ENCODE measurements at regions of chr21 and their contacts with region 1.

Region 1: DNA sequence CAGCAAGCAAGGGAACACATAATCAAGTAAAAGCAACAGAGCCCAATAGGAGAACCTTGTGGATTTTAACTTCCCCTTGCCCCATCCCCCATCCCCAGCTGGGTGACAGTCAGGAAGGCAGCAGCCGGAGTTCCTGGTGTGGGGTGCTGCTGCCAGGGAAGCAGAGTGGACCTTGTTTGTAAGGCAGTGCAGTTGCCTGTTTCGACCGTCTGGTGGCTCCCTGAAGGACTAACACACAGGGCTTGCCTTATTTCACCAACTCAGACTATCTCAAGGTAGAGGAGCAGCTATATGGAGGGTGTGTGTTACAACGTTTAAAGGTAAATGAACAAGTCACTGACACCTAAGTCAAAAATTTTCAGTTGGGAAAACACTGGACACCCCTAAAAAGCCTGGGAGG is 6.6 kb downstream of the KRTAP10-8 start:
- DNase-seq: peak; percentile 27
- ATAC-seq: peak; percentile 64
- H3K4me3 Mint-ChIP-seq: peak overlapping the region; percentile 18
- H3K27ac Mint-ChIP-seq: peak overlapping the region; percentile 90
- H3K4me1 Mint-ChIP-seq: peaks cover 45% of the 10 kb centered on the region
- H3K27me3 Mint-ChIP-seq: no peaks in the 10 kb centered on the region

Region 2: DNA sequence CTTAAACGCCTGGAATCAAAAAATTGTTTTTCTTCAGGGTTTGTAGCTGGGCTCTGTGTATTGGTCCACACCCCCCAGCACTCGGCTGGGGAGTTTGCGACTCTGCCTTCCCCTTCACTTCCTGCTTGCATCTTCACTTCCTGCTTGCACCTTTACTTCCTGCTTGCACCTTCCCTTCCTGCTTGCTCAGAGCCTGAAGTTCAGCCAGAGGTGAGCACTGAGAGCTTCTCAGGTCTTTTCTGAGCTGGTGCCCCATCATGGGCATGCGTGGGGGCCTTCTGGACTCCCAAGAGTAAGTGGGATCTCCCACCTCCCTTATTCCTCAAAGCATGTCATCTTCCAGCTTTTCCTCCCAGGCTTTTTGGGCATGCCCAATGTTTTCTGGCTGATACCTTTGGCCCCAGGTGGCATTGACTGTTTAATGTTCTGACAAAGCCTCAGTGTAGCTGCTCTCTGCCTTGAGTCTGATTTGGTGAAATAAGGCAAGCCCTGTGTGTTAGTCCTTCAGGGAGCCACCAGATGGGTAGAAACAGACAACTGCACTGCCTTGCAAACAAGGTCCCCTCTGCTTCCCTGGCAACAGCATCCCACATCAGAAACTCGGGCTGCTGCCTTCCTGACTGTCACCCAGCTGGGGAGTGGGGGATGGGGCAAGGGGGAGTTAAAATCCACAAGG is 70.7 kb before region 1 on chr21:
- CTCF ChIA-PET with region 1: no interaction called
- POLR2A ChIA-PET with region 1: no interaction called
- intact Hi-C with region 1: loop called in 1 of 2 experiments (anchors 5 kb)
- DNase-seq: peak; percentile 33
- ATAC-seq: peak; percentile 71
- H3K4me3 Mint-ChIP-seq: peak overlapping the region; percentile 34
- H3K27ac Mint-ChIP-seq: peak overlapping the region; percentile 93
- H3K4me1 Mint-ChIP-seq: peaks cover 23% of the 10 kb centered on the region
- H3K27me3 Mint-ChIP-seq: no peaks in the 10 kb centered on the region

Region 3: DNA sequence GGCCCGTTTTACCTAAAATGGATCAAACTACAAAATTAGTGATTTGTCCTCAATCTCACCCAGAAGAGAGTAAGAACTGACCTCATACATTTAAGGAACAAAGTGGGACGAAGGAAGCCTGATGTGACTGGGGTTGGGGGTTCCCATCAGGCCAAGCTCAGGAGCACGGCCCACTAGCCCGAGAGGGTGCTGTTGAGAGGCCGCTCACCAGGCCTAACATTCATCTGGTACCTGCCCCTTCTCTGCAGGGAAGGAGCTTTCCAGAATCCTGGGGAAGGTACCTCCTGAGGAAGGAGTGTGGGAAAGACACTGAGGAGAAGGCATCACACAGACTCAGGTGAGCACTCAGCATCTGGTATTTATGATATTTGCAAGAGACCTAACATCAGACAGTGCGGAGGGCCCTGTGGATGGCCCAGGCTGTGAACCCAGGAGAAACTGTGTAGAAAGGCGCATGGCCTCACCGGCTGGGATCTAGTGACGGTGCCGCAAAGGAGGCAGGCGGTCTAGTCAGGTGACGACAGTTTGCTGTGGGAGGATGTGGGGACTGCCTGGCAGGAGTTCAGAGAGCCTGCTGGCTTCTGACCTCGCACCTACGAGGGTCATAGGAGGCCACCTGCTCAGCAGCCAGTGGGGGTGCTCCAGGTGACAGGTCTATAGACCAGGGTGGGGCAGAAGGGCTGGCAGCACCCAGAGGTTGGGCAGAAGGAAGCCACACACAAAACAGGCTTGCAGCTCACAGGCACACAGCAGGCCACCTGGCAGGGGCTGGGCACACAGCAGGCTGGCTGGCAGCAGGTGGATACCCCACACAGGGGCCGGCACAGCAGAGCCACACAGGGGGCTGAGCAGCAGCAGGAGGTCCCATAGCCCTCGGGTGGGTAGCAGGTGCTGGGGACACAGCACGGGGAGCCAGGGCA is 35.4 kb after region 1 on chr21:
- CTCF ChIA-PET with region 1: no interaction called
- POLR2A ChIA-PET with region 1: no interaction called
- intact Hi-C with region 1: loop called in 1 of 2 experiments (anchors 5 kb)
- DNase-seq: peak; percentile 35
- ATAC-seq: no peak
- H3K4me3 Mint-ChIP-seq: no peak overlapping the region
- H3K27ac Mint-ChIP-seq: peak overlapping the region; percentile 42
- H3K4me1 Mint-ChIP-seq: peaks cover 40% of the 10 kb centered on the region
- H3K27me3 Mint-ChIP-seq: no peaks in the 10 kb centered on the region

Measured in activated CD4-positive, alpha-beta T cell treated with anti-CD3 and anti-CD28 coated beads for 36 hours (primary cell).